Activated CD4-positive, alpha-beta memory T cell treated with anti-CD3 and anti-CD28 coated beads, Interleukin-2, amount 10 ng/mL, durations not matched to agents 7 days and 5 days (primary cell): ENCODE measurements at regions of chr2 and their contacts with region 1.

Region 1: DNA sequence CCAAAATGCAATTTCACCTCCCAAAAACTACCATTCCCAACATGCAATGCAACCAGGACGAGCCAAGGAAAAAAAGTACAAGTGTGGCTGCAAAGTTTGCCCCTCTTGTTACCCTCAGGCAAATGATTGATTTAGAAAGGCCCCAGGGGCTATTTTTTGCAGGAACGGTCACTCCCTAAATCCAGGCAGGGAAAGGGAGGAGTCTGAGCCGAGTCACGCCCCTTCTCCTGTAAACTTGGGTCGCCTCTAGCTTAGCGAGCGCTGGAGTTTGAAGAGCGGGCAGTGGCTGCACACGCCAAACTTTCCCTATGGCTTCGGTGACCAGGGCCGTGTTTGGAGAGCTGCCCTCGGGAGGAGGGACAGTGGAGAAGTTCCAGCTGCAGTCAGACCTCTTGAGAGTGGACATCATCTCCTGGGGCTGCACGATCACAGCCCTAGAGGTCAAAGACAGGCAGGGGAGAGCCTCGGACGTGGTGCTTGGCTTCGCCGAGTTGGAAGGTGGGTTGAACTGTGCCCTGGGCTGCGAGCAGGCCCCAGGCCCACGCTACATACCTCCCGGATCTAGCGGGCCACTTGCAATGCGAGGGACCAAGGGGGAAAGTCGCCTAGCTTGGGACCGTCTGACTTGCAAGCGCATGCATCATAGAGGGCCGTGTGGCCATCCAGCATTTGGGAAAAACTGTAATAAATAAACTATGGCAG is at the start of gene GALM:
- DNase-seq: peak; percentile 74
- H3K4me3 Mint-ChIP-seq: peak within 1 kb of the TSS; percentile 98
- H3K27ac Mint-ChIP-seq: peak within 1 kb of the TSS; percentile 97
- H3K4me1 Mint-ChIP-seq: peaks cover 71% of the 10 kb centered on the region
- H3K27me3 Mint-ChIP-seq: no peaks in the 10 kb centered on the region
- total RNA-seq, gene GALM: 94.7 to 97.4 TPM

Region 2: DNA sequence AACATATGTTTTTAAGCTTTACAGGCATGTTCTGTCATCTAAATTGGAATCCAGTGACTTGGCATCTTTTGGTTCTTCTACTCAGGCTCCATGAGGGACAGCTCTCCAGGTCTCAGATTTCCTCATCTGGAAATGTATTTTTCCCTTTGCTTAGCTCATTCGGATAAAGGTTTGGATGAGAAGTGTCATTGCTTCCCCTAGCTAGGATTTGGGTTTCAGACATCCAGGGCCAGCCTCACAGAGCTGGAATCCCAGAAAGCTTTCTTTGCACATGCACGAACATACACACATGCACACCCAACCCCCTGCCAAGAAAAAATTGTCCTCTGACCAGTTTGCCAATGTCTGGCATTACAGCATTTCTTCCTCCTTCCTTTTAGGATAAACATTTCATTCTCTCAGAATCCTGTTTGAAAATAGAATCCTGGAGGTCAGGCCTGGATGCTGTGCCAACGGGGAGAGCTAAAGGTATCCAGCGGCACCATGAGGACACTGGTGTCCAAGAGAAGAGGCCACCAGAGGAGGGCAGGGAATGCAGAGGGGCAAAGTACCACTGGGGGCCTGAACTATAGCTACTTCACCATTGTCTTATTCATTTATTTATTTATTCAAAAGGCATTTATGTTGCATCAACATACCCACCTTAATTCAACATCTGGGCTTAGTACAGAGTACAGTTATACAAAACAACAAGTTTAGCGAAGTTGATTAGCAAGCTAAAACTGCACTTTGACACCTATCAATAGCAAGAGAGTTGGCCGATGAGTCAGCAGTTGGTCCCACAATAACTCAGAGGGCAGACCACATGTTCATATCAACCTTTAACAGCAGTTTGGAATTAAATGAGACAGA is 191.1 kb before region 1 on chr2:
- CTCF ChIA-PET with region 1: no interaction called
- POLR2A ChIA-PET with region 1: no interaction called
- DNase-seq: peak; percentile 40
- H3K4me3 Mint-ChIP-seq: no peak overlapping the region
- H3K27ac Mint-ChIP-seq: no peak overlapping the region
- H3K4me1 Mint-ChIP-seq: peaks cover 31% of the 10 kb centered on the region
- H3K27me3 Mint-ChIP-seq: peaks cover 6% of the 10 kb centered on the region

Region 3: DNA sequence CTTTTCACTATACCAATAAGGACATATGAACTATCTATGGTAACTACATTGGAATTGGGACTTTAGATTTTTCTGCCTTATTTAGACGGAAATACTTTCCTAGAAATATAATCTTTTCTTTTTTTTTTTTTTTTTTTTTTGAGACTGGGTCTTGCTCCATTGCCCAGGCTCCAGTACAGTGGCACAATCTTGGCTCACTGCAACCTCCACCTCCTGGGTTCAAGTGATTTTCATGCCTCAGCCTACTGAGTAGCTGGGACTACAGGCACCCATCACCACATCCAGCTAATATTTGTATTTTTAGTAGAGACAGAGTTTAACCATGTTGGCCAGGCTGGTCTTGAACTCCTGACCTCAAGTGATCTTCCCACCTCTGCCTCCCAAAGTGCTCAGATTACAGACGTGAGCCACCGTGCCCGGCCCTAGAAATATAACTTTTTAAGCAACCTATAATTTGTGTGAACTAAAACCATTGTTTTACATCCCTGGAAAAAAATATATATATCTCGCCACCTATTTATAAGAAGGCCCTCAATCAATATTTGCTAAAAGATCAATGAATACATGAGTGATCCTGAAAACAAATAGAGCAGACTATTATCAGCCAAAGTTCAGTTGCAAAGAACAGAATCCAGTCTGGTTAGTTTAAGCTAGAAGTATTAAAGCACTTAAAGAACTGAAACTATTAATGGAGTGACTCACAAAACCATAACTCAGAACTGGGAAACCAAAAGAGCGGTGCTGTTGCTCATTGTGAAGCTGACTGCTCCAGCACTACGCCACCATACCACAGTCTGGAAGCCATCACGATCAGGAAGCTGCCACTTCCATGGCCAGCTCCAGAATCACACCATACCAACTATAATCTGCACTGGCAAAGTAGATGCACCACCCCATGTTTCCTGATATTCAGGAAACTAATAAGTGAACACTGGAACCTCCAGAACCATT is 54.9 kb before region 1 on chr2:
- CTCF ChIA-PET with region 1: interaction called, 117 read pairs
- POLR2A ChIA-PET with region 1: interaction called, 646 read pairs
- DNase-seq: peak; percentile 53
- H3K4me3 Mint-ChIP-seq: no peak overlapping the region
- H3K27ac Mint-ChIP-seq: peak overlapping the region; percentile 69
- H3K4me1 Mint-ChIP-seq: peaks cover 79% of the 10 kb centered on the region
- H3K27me3 Mint-ChIP-seq: no peaks in the 10 kb centered on the region

Region 4: DNA sequence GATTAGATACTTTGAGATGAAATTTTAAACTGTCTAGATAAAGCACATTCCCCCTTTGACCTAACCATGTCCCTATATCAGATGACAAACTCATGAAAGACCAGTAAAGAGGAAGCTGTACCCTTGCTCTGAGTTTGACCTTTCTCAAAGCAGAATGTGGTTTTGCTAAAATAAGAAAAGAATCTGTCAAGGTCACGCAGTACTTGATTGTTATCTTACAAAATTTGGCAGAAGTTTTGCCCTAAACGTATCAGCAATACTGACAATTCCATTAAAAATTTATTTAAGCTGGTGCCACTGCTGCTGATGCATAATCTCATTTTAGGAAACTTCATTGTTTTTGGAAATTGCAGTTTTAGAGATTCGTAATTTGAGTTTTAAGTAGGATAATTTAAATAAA is 31.3 kb before region 1 on chr2:
- CTCF ChIA-PET with region 1: no interaction called
- POLR2A ChIA-PET with region 1: interaction called, 106 read pairs
- DNase-seq: no peak
- H3K4me3 Mint-ChIP-seq: no peak overlapping the region
- H3K27ac Mint-ChIP-seq: peak overlapping the region; percentile 52
- H3K4me1 Mint-ChIP-seq: peaks cover 43% of the 10 kb centered on the region
- H3K27me3 Mint-ChIP-seq: no peaks in the 10 kb centered on the region

Region 5: GRCh38 chr2:38653715-38654527 is 12.1 kb before region 1 on chr2:
- CTCF ChIA-PET with region 1: interaction called, 39 read pairs
- POLR2A ChIA-PET with region 1: interaction called, 268 read pairs
- DNase-seq: peak; percentile 74
- H3K4me3 Mint-ChIP-seq: peak overlapping the region; percentile 64
- H3K27ac Mint-ChIP-seq: peak overlapping the region; percentile 95
- H3K4me1 Mint-ChIP-seq: peaks cover 83% of the 10 kb centered on the region
- H3K27me3 Mint-ChIP-seq: no peaks in the 10 kb centered on the region

Region 6: DNA sequence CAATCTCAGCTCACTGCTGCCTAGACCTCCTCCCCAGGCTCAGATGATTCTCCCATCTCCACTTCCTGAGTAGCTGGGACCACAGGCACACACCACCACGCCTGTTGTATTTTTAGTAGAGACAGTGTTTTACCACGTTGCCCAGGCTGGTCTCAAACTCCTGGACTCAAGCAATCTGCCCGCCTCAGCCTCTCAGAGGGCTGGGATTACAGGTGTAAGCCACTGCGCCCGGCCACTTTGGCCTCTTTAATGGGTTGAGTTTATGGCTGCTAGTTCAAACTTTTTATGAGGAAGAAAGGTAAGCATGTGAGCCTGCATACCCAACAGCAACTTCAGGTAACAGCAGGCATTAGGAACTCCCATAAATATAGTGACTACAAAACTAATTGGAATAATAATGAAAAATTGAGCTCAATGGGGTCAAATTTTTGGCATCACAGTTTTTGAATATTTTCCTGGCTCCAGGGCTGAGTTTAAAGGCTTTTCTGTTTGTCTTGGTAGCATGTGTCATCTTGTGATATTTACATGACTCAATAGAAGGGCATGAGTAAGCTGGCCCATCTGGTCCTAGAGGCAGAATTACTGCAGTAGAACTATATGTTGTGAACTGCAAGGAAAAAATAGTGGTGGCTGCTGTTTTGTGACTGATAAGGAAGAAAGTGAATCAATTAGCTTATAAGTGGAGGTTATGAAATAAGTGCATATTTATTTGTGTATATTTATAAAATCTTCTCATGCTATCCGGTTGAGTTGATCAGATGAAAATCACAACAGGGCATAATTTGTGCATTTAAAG is 24.7 kb after region 1 on chr2:
- CTCF ChIA-PET with region 1: interaction called, 5 read pairs
- POLR2A ChIA-PET with region 1: interaction called, 73 read pairs
- DNase-seq: no peak
- H3K4me3 Mint-ChIP-seq: no peak overlapping the region
- H3K27ac Mint-ChIP-seq: peak overlapping the region; percentile 44
- H3K4me1 Mint-ChIP-seq: peaks cover 77% of the 10 kb centered on the region
- H3K27me3 Mint-ChIP-seq: no peaks in the 10 kb centered on the region

Region 7: GRCh38 chr2:38720613-38721241 is 54.7 kb after region 1 on chr2:
- CTCF ChIA-PET with region 1: interaction called, 4 read pairs
- POLR2A ChIA-PET with region 1: interaction called, 26 read pairs
- DNase-seq: no peak
- H3K4me3 Mint-ChIP-seq: no peak overlapping the region
- H3K27ac Mint-ChIP-seq: peak overlapping the region; percentile 70
- H3K4me1 Mint-ChIP-seq: peaks cover 65% of the 10 kb centered on the region
- H3K27me3 Mint-ChIP-seq: no peaks in the 10 kb centered on the region

Region 8: DNA sequence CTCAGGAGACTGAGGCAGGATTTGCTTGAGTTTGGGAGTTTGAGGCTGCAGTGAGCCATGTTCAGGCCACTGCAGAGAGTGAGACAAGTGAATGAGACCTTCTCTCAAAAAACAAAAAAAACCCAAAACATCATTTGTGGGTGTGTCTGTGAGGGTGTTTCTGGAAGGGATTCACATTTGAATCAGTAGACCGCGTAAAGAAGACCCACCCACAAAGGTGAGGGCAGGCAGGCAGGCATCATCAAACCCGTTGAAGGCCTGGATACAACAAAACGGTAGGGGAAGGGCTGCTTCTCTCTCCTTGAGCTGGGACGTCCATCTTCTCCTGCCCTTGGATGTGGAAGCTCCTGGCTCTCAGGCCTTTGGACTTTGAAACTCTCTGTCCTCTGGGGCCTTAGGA is 552.4 kb after region 1 on chr2:
- CTCF ChIA-PET with region 1: no interaction called
- POLR2A ChIA-PET with region 1: no interaction called
- DNase-seq: peak; percentile 55
- H3K4me3 Mint-ChIP-seq: peak overlapping the region; percentile 66
- H3K27ac Mint-ChIP-seq: peak overlapping the region; percentile 95
- H3K4me1 Mint-ChIP-seq: peaks cover 72% of the 10 kb centered on the region
- H3K27me3 Mint-ChIP-seq: no peaks in the 10 kb centered on the region